MCF 10A (cell line): ENCODE measurements at regions of chr11 and their contacts with region 1.

Region 1: DNA sequence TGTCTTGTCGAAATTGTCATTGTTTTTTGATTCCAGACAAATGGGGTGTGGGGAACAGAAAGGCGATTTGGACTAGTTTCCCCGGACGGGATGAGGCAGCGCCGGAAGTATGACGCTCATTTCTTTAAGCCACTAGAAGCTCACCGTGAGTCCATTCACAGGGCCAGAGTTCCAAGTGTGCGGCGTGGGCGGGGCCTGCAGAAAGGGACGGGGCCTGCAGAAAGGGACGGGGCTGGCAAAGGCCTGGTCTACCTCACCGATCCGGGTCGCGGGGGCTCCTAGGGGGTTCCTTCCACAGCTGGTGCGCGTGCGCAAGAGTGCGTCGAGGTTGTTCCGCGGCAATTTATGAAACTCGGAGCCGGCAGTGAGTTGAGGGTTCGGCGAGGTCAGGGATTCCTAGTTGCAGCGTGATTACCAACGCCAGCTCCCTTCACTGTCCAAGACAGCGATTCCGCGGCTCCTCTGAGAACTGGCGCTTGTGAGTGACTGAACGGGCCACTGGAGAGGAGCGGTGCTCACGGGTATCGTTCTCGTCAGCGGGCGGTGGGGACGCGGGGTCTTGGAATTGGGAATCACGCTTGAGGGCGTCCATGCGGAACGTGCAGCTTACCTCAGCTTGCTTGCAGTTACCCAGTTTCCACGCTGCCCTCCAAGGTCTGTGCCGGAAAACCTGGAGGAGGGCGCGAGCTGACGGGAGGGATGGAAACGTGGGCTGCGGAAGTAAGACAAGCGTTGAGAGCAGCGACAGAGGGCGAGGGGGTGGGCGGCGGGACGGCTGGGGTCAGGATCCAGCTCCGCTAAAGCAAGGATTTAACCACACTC is at the start of gene ZNF215:
- DNase-seq: peak; percentile 90
- H3K4me3 Mint-ChIP-seq: peak within 1 kb of the TSS; percentile 98
- H3K27ac Mint-ChIP-seq: peak within 1 kb of the TSS; percentile 59
- H3K4me1 Mint-ChIP-seq: peaks cover 21% of the 10 kb centered on the region
- H3K27me3 Mint-ChIP-seq: no peaks in the 10 kb centered on the region
- CTCF ChIP-seq: no peak
- total RNA-seq, gene ZNF215: 9.2 and 11.1 TPM in 2 replicates

Region 2: GRCh38 chr11:6022956-6023355 is 903.5 kb before region 1 on chr11:
- CTCF ChIA-PET with region 1: no interaction called
- POLR2A ChIA-PET with region 1: no interaction called
- intact Hi-C with region 1: no loop called
- DNase-seq: peak; percentile 61
- H3K4me3 Mint-ChIP-seq: no peak overlapping the region
- H3K27ac Mint-ChIP-seq: no peak overlapping the region
- H3K4me1 Mint-ChIP-seq: no peaks in the 10 kb centered on the region
- H3K27me3 Mint-ChIP-seq: peaks cover 33% of the 10 kb centered on the region
- CTCF ChIP-seq: peak; percentile 56

Region 3: DNA sequence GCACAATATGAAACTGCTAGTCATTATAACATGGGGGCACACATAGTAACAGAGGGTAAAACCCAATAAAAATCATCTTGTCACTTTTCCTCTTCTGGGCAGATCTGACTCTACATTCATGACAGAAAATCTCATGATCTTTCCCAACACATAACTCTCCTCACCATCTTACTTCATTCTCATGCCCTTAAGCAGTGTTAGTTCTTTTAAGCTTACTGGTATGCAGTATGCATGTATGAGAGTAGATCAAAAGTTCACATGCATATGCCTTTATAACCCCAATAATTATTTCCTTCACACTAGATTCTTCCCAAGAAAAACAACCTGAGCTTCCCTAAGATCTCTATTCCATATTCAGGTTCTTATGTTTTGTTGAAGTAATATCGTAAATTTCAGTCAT is 55.1 kb before region 1 on chr11:
- CTCF ChIA-PET with region 1: no interaction called
- POLR2A ChIA-PET with region 1: no interaction called
- intact Hi-C with region 1: no loop called
- DNase-seq: no peak
- H3K4me3 Mint-ChIP-seq: no peak overlapping the region
- H3K27ac Mint-ChIP-seq: no peak overlapping the region
- H3K4me1 Mint-ChIP-seq: no peaks in the 10 kb centered on the region
- H3K27me3 Mint-ChIP-seq: no peaks in the 10 kb centered on the region
- CTCF ChIP-seq: no peak

Region 4: DNA sequence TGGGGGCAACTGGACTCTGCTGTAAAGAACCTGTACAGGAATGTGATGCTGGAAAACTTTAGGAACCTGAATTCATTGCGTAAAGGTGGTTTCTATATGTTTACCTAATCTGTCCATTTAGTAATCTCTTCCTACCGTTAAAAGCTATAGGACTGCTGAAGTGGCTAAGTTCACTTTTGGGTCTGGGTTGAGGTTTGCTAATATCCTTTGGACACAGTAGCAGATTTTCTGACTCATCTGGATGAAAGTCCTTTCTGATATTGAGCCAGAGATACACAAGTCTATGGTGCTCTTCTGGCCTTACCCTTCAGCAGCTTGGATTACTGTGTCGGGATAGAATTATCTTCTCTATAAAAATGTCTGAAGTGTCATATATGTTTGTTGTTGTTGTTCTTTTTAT is 16.7 kb after region 1 on chr11:
- CTCF ChIA-PET with region 1: interaction called, 3 read pairs
- POLR2A ChIA-PET with region 1: interaction called, 16 read pairs
- intact Hi-C with region 1: no loop called
- DNase-seq: no peak
- H3K4me3 Mint-ChIP-seq: no peak overlapping the region
- H3K27ac Mint-ChIP-seq: no peak overlapping the region
- H3K4me1 Mint-ChIP-seq: no peaks in the 10 kb centered on the region
- H3K27me3 Mint-ChIP-seq: no peaks in the 10 kb centered on the region
- CTCF ChIP-seq: no peak

Region 5: GRCh38 chr11:7020183-7020917 is 93.9 kb after region 1 on chr11 and contains the starts of genes NLRP14 and ZNF214:
- CTCF ChIA-PET with region 1: interaction called, 4 read pairs
- POLR2A ChIA-PET with region 1: interaction called, 12 read pairs
- intact Hi-C with region 1: loop called (anchors 1 kb)
- DNase-seq: peak; percentile 94
- H3K4me3 Mint-ChIP-seq: peak within 1 kb of the TSS; percentile 95
- H3K27ac Mint-ChIP-seq: peak within 1 kb of the TSS; percentile 91
- H3K4me1 Mint-ChIP-seq: peaks cover 5% of the 10 kb centered on the region
- H3K27me3 Mint-ChIP-seq: no peaks in the 10 kb centered on the region
- CTCF ChIP-seq: no peak
- total RNA-seq, gene NLRP14: not detected in 2 replicates
- total RNA-seq, gene ZNF214: 3.1 and 4.2 TPM in 2 replicates

Region 6: DNA sequence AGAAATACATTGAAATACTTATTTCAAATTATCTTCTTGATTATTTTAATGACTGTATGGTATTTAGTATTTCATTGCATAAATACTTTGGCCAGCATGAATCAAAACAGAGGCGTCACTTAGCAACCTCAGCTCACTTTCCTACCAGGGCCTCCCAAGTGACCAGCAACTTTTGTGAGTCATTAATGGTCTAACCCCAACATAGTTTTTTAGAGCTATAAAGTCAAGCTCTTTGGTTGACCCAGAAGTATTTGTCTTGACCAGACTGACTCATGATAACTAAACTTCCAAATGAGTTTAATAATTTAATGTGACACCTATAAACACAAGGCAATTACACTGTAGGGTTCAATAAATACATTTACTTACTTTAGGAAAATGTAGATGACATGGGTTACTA is 134.4 kb after region 1 on chr11:
- CTCF ChIA-PET with region 1: no interaction called
- POLR2A ChIA-PET with region 1: no interaction called
- intact Hi-C with region 1: no loop called
- DNase-seq: peak; percentile 5
- H3K4me3 Mint-ChIP-seq: no peak overlapping the region
- H3K27ac Mint-ChIP-seq: no peak overlapping the region
- H3K4me1 Mint-ChIP-seq: no peaks in the 10 kb centered on the region
- H3K27me3 Mint-ChIP-seq: no peaks in the 10 kb centered on the region
- CTCF ChIP-seq: no peak